GM10248 (cell line): ENCODE measurements at regions of chr1 and their contacts with region 1.

Region 1: GRCh38 chr1:93715529-93716126 is 34.0 kb upstream of the BCAR3 start:
- DNase-seq: no peak
- CTCF ChIP-seq: no peak

Region 2: DNA sequence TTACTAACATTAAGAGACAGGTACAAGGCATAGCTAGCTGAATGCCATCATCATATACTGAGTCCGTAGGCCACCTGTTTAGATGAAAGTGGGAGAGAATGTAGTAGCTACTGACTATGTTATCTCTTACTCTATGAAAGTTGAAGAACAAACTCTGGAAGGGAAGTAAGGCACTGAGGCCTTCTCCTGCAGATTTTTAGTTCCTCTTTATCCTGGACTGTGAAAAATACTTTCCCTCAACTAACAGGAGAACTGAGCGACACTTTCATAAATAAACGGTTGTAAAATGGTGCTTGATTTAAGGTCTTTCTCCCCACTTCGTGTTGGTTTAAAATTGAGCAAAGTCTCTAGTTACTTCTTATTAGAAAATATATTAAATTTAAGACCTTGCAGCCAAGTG is 165.8 kb before region 1 on chr1:
- CTCF ChIA-PET with region 1: no interaction called
- POLR2A ChIA-PET with region 1: no interaction called
- DNase-seq: no peak
- CTCF ChIP-seq: no peak

Region 3: GRCh38 chr1:93686497-93687250 is 29.0 kb before region 1 on chr1:
- CTCF ChIA-PET with region 1: interaction called, 15 read pairs
- POLR2A ChIA-PET with region 1: no interaction called
- DNase-seq: no peak
- CTCF ChIP-seq: no peak

Region 4: DNA sequence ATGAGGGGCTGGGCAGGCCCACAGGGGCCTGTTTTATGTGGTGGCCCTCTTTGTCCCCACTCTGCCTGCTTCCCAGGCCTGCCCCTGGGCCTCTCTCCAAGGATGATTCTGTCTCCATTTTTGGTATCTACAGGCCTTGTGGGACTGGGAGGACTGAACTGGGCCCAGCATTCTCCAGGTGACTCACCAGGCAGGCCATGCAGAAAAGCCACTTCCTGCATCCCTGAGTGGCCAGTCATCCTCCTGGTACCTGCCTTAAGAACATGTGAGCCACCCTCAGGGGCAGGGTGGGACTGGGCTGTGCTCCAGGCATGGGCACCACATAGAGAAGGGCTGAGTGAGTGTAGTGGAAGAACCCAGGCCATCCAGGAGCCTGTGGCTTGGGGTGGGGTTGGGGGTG is 14.0 kb before region 1 on chr1:
- CTCF ChIA-PET with region 1: interaction called, 27 read pairs
- POLR2A ChIA-PET with region 1: interaction called, 3 read pairs
- DNase-seq: peak; percentile 45
- CTCF ChIP-seq: no peak

Region 5: GRCh38 chr1:93744299-93744988 is 28.8 kb after region 1 on chr1:
- CTCF ChIA-PET with region 1: no interaction called
- POLR2A ChIA-PET with region 1: no interaction called
- DNase-seq: peak; percentile 29
- CTCF ChIP-seq: no peak